Ovary (tissue), 10 donors: ENCODE measurements at regions of chr19 and their contacts with region 1.

Region 1: DNA sequence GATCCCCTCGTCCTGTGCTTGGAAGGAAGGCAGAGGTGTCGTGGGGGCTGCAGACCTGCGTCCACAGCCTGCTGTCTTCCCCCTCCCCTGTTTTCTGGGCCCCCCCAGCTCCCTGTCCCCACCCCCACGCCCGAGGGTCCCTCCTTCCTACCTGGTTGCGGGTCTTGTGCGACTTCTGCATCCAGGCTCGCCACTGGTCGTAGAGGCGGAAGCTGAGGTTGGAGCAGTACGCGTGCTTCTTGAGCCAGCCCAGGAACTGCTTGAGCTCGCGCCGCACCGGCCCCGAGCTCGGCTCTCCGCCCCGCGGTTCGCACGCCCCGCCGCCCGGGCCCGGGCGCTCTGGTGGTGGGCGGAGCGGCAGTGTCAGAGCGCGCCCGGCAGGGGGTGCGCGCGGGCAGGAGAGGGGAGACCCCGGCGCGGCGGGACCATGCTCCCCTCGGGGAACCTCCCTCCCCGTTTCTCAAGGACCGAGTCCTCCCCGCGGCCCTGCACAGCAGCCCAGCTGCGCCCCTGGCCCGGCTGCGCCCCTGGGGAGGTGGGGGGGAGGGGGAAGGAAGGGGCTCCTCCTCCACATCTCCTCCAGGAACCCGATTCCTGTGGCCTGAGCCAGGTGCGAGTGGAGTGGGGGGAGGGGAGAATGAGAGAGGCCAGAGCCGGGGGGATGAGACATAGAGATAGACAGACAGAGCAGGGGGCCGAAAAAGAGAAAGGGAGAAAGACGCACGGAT is 5.7 kb downstream of the REX1BD start:
- DNase-seq: peak; percentile 76 to 89 (median 85)
- H3K4me3 ChIP-seq: peak overlapping the region; percentile 25
- H3K27ac ChIP-seq: peak overlapping the region in 1 of 2 donors; percentile 17
- H3K4me1 ChIP-seq: peaks cover 12% of the 10 kb centered on the region
- H3K27me3 ChIP-seq: no peaks in the 10 kb centered on the region
- CTCF ChIP-seq: peak; percentile 67 to 94 (median 91)
- EP300 ChIP-seq: no peak
- POLR2A ChIP-seq: no peak

Region 2: GRCh38 chr19:18557474-18558201 is 36.6 kb before region 1 on chr19 and contains the start of gene KXD1:
- intact Hi-C with region 1: no loop called
- DNase-seq: peak; percentile 94 to 97 (median 96)
- H3K4me3 ChIP-seq: peak within 1 kb of the TSS; percentile 98
- H3K27ac ChIP-seq: peak within 1 kb of the TSS; percentile 70 to 92
- H3K4me1 ChIP-seq: no peaks in the 10 kb centered on the region
- H3K27me3 ChIP-seq: no peaks in the 10 kb centered on the region
- CTCF ChIP-seq: no peak
- EP300 ChIP-seq: peak; percentile 69
- POLR2A ChIP-seq: peak; percentile 87
- total RNA-seq, gene KXD1: 63.5 to 76.7 (median 65.9) TPM

Region 3: GRCh38 chr19:18683213-18683939 is 89.1 kb after region 1 on chr19 and contains the start of gene CRTC1:
- intact Hi-C with region 1: loop called in 2 of 4 experiments (anchors 5 to 10 kb)
- DNase-seq: peak; percentile 91 to 95 (median 94)
- H3K4me3 ChIP-seq: peak within 1 kb of the TSS; percentile 52
- H3K27ac ChIP-seq: peak within 1 kb of the TSS in 1 of 2 donors; percentile 61
- H3K4me1 ChIP-seq: peaks cover 4% of the 10 kb centered on the region
- H3K27me3 ChIP-seq: no peaks in the 10 kb centered on the region
- CTCF ChIP-seq: no peak
- EP300 ChIP-seq: no peak
- POLR2A ChIP-seq: peak; percentile 76
- total RNA-seq, gene CRTC1: 2.4 to 19.5 (median 14.6) TPM

Region 4: GRCh38 chr19:18846862-18847548 is 252.7 kb after region 1 on chr19:
- intact Hi-C with region 1: loop called (anchors 2 to 10 kb)
- DNase-seq: peak; percentile 78 to 88 (median 84)
- H3K4me3 ChIP-seq: no peak overlapping the region
- H3K27ac ChIP-seq: peak overlapping the region in 1 of 2 donors; percentile 13
- H3K4me1 ChIP-seq: peaks cover 48% of the 10 kb centered on the region
- H3K27me3 ChIP-seq: no peaks in the 10 kb centered on the region
- CTCF ChIP-seq: peak; percentile 76 to 81 (median 80)
- EP300 ChIP-seq: no peak
- POLR2A ChIP-seq: no peak